BJ (cell line): ENCODE measurements at regions of chr12 and their contacts with region 1.

Region 1: DNA sequence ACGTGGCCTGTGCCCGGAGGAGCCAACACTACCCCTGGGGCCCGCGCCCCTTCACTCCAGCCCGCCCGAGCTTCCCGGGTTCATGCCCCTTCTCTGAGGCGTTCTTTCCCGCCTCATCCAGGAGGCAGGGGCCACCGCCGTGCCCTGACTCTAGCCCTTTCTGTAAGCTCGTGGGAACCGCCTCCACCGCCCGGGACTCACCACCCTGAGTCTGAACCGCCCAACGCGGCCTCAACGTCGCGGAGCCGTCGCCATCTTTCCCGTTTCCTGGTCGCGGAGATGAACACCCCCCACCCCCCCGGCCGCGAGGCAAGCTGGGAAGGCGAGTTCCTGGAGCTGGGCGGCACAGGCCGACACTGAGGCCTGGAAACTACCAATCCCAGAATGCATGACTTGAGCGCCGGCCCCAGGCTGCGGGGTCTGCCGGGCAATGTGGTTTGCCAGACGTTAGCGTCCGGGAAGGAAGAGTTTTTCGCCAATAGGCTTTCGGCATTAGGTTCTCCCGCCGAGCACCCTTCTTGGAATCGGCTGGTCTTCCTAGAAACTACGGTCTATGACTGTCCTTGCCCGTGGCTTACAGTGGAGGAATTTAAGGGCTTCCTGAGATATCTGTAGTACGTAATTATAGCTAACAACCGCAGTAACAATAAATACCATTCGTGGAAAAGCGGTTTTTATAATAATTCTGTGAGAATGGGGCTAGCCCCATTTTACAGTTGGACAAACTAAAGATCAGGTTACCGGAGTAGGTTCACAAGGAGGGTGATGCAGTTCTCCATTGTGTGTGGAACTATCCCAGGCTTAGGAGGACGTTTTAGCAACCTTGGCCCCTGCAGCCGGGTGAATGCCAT is at the start of gene DDX23:
- DNase-seq: peak; percentile 91
- H3K4me3 ChIP-seq: peak within 1 kb of the TSS; percentile 93
- H3K27me3 ChIP-seq: peaks cover 4% of the 10 kb centered on the region; the same call in 1 of the 2 replicates
- CTCF ChIP-seq: no peak
- polyA plus RNA-seq, gene DDX23: 54.5 and 59.4 TPM in 2 replicates

Region 2: GRCh38 chr12:48601013-48601756 is 250.9 kb before region 1 on chr12:
- CTCF ChIA-PET with region 1: no interaction called
- POLR2A ChIA-PET with region 1: no interaction called
- DNase-seq: no peak
- H3K4me3 ChIP-seq: no peak overlapping the region
- H3K27me3 ChIP-seq: no peaks in the 10 kb centered on the region; the same call in 1 of the 2 replicates
- CTCF ChIP-seq: no peak

Region 3: DNA sequence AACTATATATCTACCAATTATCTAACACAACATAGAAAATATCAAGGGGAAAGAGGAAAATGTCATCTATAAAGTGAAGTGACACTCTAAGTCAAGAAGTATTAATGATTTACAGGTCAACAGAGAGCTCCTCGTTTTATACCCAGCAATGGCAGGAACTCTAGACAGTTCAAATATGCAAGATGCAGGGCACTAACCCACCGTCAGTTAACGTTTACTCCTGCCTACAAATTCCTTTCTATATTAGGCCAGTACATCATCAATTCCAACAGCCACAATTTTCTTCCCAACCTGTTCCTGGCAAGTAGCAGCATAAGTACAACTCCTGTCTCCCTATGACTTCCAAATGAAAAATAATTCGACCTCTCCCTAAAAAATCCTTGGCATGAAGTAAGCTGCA is 161.1 kb before region 1 on chr12:
- CTCF ChIA-PET with region 1: no interaction called
- POLR2A ChIA-PET with region 1: no interaction called
- DNase-seq: no peak
- H3K4me3 ChIP-seq: no peak overlapping the region
- H3K27me3 ChIP-seq: no peaks in the 10 kb centered on the region
- CTCF ChIP-seq: no peak

Region 4: DNA sequence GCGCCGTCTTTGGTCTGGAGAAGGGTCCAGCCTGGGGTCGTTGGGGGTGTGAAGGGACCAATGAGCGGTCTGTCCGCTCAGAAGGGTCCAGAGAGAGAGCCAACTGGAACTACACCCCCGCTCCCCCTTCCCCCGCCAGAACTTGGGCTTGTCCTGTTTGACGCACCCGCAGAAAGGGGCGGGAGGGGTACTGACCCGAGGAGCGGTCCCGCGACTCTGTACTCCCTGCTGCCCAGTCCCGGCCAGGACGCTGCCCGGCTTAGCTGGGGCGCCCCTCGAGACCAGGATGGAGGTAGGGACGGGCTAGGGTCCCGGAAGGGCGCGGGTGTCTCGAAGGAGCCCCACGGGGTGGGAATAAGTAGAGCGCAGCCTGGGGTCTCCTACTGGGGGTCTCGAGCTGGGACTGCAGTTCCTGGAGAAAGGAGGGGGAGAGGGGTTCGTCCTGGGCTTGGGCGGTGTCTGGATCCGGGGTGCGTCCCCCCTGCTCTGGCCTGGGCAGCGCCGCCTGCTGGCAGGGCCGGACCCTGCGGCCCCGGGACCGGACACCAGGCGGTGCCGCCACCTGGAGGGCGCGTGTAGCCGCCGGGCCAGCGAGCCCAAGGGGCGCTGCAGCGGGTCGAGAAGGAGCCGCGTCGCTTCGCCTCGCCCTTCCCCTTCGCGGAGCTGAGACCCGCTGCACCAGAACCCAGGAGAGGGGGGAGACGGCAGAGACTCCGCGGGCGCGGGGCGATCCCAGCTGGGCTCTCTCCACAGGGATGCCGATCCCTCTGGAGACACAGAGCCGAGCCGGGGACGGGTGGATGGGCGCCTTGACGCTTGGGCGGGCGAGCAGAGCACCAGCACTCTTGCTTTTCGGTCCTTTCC is 37.6 kb before region 1 on chr12:
- CTCF ChIA-PET with region 1: interaction called, 16 read pairs
- POLR2A ChIA-PET with region 1: no interaction called
- DNase-seq: peak; percentile 31
- H3K4me3 ChIP-seq: peak overlapping the region; percentile 74
- H3K27me3 ChIP-seq: no peaks in the 10 kb centered on the region
- CTCF ChIP-seq: peak; percentile 82

Region 5: GRCh38 chr12:48865434-48866290 is 13.6 kb after region 1 on chr12 and contains the start of gene RND1:
- CTCF ChIA-PET with region 1: interaction called, 53 read pairs
- POLR2A ChIA-PET with region 1: interaction called, 4 read pairs
- DNase-seq: peak; percentile 52
- H3K4me3 ChIP-seq: peak within 1 kb of the TSS; percentile 43
- H3K27me3 ChIP-seq: peaks cover 22% of the 10 kb centered on the region
- CTCF ChIP-seq: 0 out of 2 replicates have a peak, but pooled peaks have one; percentile 15
- polyA plus RNA-seq, gene RND1: 0.31 and 0.72 TPM in 2 replicates

Region 6: DNA sequence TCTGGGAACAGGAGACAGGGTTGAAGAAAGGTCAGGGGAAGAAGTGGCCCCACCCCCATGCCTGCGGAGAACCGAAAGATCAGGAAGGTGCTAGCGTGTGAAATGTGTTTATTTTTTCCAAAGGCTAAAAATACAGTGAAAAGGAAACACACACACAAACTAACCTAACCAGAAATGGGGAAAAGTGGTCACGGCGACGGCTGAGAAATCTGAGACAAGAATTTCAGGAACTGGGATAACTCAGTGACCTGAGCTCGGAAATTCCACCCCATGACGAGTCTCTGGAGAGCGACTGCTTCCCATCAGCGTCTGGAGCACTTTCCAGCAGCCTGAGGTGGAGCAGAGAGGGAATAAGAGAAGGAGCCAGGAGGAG is 30.2 kb after region 1 on chr12:
- CTCF ChIA-PET with region 1: interaction called, 67 read pairs
- POLR2A ChIA-PET with region 1: no interaction called
- DNase-seq: no peak
- H3K4me3 ChIP-seq: peak overlapping the region; percentile 20
- H3K27me3 ChIP-seq: peaks cover 6% of the 10 kb centered on the region
- CTCF ChIP-seq: no peak

Region 7: GRCh38 chr12:48901278-48901677 is 49.2 kb after region 1 on chr12:
- CTCF ChIA-PET with region 1: interaction called, 37 read pairs
- POLR2A ChIA-PET with region 1: no interaction called
- DNase-seq: no peak
- H3K4me3 ChIP-seq: no peak overlapping the region
- H3K27me3 ChIP-seq: no peaks in the 10 kb centered on the region; the same call in 1 of the 2 replicates
- CTCF ChIP-seq: no peak

Region 8: DNA sequence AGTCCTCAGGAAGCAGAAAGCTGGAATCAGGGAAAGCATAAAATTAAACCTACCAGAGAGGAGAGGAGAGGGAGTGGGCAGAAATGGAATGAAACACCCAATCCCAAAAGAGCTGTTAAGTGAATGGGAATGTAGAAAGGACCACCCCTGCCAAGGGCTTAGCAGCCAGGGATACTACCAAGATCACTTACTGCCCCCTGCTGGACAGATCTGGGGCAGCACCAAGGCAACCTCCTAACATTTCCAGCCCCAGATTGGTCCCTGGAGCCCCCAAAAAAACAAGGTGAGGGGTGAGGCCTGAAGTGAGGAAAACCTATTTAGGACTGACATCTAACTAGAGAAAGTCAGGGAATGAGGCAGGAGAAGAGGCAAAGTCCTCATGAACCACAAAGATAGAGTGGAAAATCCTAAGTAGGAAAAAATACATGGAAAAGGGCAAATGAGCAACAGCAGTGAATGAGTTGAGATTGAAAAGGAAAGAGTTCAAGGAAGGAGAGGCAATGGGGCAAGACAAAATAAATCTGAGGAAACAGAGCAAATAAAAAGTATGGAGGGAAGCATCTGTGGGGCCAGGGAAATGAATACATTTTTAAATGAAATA is 84.4 kb after region 1 on chr12:
- CTCF ChIA-PET with region 1: interaction called, 45 read pairs
- POLR2A ChIA-PET with region 1: no interaction called
- DNase-seq: no peak
- H3K4me3 ChIP-seq: no peak overlapping the region
- H3K27me3 ChIP-seq: no peaks in the 10 kb centered on the region
- CTCF ChIP-seq: peak; percentile 95

Region 9: DNA sequence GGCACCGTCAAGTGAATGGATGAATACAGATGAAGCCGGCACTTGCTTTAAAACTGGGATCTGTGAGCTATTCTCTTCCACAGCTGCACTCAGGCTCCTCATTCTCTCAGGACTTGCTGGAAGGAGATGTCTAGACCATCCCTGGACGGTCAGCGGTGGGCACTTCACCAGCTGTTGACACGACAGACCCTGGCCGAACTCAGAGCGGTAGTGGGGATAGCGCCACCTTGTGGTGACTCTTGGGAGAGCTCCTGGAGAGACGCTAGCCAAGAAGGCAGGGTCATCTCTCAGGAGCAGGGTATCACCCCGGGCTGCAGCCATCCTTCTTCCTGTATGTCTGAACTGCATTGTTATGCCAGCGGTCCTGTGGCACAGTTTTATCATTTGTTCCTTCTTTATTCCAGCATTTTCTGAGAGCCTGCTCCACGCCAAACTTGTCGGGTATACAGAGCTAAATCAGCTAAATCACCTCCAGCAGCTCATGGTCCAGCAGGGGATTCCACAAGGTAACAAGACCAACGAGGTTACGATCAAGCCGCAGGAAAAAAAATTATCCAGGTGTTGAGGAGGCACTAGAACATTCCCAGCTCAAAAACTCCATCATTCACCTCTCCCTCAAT is 136.0 kb after region 1 on chr12:
- CTCF ChIA-PET with region 1: interaction called, 30 read pairs
- POLR2A ChIA-PET with region 1: no interaction called
- DNase-seq: no peak
- H3K4me3 ChIP-seq: no peak overlapping the region
- H3K27me3 ChIP-seq: peaks cover 37% of the 10 kb centered on the region
- CTCF ChIP-seq: peak; percentile 90